ENCODE measurements at regions of chr14 and their contacts with region 1.

Region 1: GRCh38 chr14:65501328-65501727 is 88.8 kb downstream of the FUT8 start:
- DNase-seq: no peak
- H3K4me3 Mint-ChIP-seq: no peak overlapping the region
- H3K27ac Mint-ChIP-seq: no peak overlapping the region
- H3K4me1 Mint-ChIP-seq: peaks cover 20% of the 10 kb centered on the region
- H3K27me3 Mint-ChIP-seq: no peaks in the 10 kb centered on the region

Region 2: DNA sequence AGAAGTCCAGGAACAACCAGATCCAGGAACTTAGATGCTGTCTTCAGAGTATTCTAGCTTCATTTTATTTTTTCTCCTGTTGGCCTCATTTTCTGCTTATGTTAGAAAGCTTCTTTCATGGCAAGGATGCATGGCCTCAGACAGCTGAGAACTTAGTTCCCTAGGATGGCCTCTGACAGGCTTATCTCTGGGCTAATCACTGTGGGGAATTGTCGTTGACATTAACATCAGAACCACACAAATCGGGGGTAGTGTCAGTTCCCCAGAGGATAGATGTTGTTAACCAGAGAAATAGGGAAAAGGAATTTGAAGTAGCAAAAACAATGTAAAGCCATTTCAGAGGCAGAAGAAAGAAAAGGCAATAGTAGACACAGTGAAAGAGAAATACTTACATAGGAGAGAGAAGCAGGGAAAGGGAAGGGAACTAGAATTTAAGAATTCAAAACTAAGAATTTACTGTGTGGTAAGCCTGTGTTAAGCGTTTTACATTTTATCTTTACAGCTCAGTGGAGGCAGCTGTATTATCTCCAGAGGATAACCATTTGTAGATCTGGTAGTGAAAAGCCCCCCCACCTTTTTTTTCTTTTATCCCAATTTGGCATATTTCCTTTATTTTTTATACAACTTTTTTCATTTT is 67.0 kb before region 1 on chr14:
- CTCF ChIA-PET with region 1: no interaction called
- POLR2A ChIA-PET with region 1: no interaction called
- DNase-seq: no peak
- H3K4me3 Mint-ChIP-seq: no peak overlapping the region
- H3K27ac Mint-ChIP-seq: no peak overlapping the region
- H3K4me1 Mint-ChIP-seq: peaks cover 57% of the 10 kb centered on the region
- H3K27me3 Mint-ChIP-seq: no peaks in the 10 kb centered on the region

Region 3: GRCh38 chr14:65476273-65476941 is 24.9 kb before region 1 on chr14:
- CTCF ChIA-PET with region 1: interaction called, 10 read pairs
- POLR2A ChIA-PET with region 1: no interaction called
- DNase-seq: no peak
- H3K4me3 Mint-ChIP-seq: no peak overlapping the region
- H3K27ac Mint-ChIP-seq: no peak overlapping the region
- H3K4me1 Mint-ChIP-seq: peaks cover 49% of the 10 kb centered on the region
- H3K27me3 Mint-ChIP-seq: no peaks in the 10 kb centered on the region

Measured in activated CD4-positive, alpha-beta T cell treated with anti-CD3 and anti-CD28 coated beads, Interleukin-2, amount 10 ng/mL, durations not matched to agents 7 days and 5 days (primary cell).